Activated CD8-positive, alpha-beta memory T cell treated with anti-CD3 and anti-CD28 coated beads, Interleukin-2, amount 10 ng/mL, durations not matched to agents 7 days and 5 days (primary cell): ENCODE measurements at regions of chr15 and their contacts with region 1.

Region 1: DNA sequence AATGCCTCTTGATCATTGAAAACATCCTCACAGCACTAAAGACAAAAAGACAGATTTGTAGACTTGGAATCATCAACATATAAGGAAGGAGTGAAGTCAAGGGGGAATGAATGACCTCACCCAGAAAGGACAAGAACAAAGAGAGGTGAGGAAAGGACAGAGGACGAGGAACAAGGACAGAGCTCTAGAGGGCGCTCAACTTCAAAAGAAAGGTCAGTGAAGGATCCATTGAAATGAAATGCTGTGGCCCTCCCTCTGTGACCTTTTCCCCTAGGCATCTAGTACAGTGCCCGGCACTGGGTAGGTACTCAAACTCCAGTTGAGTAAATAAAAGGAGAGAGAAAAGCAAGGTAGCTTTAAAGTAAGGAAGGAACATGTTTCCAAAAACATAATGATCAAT is 2.6 kb downstream of the ATP8B4 start:
- DNase-seq: peak; percentile 70
- ATAC-seq: peak; percentile 50
- H3K4me3 Mint-ChIP-seq: peak overlapping the region; percentile 68
- H3K27ac Mint-ChIP-seq: peak overlapping the region; percentile 78
- H3K4me1 Mint-ChIP-seq: peaks cover 80% of the 10 kb centered on the region
- H3K27me3 Mint-ChIP-seq: no peaks in the 10 kb centered on the region

Region 2: GRCh38 chr15:50128266-50128665 is 11.8 kb after region 1 on chr15:
- CTCF ChIA-PET with region 1: interaction called, 73 read pairs
- DNase-seq: no peak
- ATAC-seq: no peak
- H3K4me3 Mint-ChIP-seq: no peak overlapping the region
- H3K27ac Mint-ChIP-seq: no peak overlapping the region
- H3K4me1 Mint-ChIP-seq: peaks cover 30% of the 10 kb centered on the region
- H3K27me3 Mint-ChIP-seq: no peaks in the 10 kb centered on the region

Region 3: DNA sequence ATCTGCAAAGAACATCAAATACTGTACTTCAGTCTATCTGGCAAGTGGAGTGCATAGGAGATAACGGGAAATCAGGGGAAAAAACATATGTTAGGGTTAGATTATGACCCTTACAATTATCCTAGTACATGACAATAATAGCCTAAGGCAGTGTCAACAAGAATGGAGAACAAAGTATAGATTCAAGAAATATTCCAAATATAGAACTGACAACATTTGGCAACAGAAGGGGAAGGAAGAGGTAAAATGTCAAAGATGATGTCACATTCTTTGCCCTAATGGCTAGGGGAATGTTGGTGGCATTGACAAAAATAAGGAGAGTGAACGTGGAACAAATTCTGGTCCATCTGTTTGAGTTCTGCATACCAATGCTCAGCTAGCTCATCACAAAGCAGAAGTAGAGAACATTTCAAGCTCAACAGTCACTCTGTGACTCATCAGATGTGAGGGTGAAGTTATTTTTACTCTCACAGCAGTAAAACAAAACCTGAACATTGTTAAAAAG is 18.1 kb after region 1 on chr15:
- CTCF ChIA-PET with region 1: interaction called, 73 read pairs
- DNase-seq: no peak
- ATAC-seq: peak; percentile 52
- H3K4me3 Mint-ChIP-seq: peak overlapping the region; percentile 25
- H3K27ac Mint-ChIP-seq: peak overlapping the region; percentile 90
- H3K4me1 Mint-ChIP-seq: peaks cover 55% of the 10 kb centered on the region
- H3K27me3 Mint-ChIP-seq: no peaks in the 10 kb centered on the region

Region 4: GRCh38 chr15:50182219-50183013 is 65.9 kb after region 1 on chr15:
- CTCF ChIA-PET with region 1: interaction called, 11 read pairs
- DNase-seq: peak; percentile 73
- ATAC-seq: peak; percentile 74
- H3K4me3 Mint-ChIP-seq: peak overlapping the region; percentile 96
- H3K27ac Mint-ChIP-seq: peak overlapping the region; percentile 96
- H3K4me1 Mint-ChIP-seq: peaks cover 68% of the 10 kb centered on the region
- H3K27me3 Mint-ChIP-seq: no peaks in the 10 kb centered on the region